Heart right ventricle (tissue), 16 donors: ENCODE measurements at regions of chr20 and their contacts with region 1.

Region 1: GRCh38 chr20:19661717-19662636 is 96.1 kb upstream of the RIN2 start:
- DNase-seq: peak; percentile 40 to 53
- ATAC-seq: peak; percentile 71 to 83 (median 80)
- H3K4me3 ChIP-seq: no peak overlapping the region
- H3K27ac ChIP-seq: no peak overlapping the region
- H3K4me1 ChIP-seq: peaks cover 0 to 7% (median 5%) of the 10 kb centered on the region in 9 donors
- H3K27me3 ChIP-seq: peaks cover 0 to 34% (median 12%) of the 10 kb centered on the region in 7 donors
- CTCF ChIP-seq: peak; percentile 94 to 99 (median 97)

Region 2: GRCh38 chr20:18412221-18412901 is 1249.6 kb before region 1 on chr20:
- intact Hi-C with region 1: loop called in 1 of 10 experiments (anchors 10 kb)
- DNase-seq: no peak
- ATAC-seq: peak in 1 of 8 donors; percentile 20
- H3K4me3 ChIP-seq: no peak overlapping the region
- H3K27ac ChIP-seq: peak overlapping the region in 1 of 10 donors; percentile 11
- H3K4me1 ChIP-seq: peaks cover 0 to 4% (median 0%) of the 10 kb centered on the region in 9 donors
- H3K27me3 ChIP-seq: no peaks in the 10 kb centered on the region
- CTCF ChIP-seq: no peak

Region 3: DNA sequence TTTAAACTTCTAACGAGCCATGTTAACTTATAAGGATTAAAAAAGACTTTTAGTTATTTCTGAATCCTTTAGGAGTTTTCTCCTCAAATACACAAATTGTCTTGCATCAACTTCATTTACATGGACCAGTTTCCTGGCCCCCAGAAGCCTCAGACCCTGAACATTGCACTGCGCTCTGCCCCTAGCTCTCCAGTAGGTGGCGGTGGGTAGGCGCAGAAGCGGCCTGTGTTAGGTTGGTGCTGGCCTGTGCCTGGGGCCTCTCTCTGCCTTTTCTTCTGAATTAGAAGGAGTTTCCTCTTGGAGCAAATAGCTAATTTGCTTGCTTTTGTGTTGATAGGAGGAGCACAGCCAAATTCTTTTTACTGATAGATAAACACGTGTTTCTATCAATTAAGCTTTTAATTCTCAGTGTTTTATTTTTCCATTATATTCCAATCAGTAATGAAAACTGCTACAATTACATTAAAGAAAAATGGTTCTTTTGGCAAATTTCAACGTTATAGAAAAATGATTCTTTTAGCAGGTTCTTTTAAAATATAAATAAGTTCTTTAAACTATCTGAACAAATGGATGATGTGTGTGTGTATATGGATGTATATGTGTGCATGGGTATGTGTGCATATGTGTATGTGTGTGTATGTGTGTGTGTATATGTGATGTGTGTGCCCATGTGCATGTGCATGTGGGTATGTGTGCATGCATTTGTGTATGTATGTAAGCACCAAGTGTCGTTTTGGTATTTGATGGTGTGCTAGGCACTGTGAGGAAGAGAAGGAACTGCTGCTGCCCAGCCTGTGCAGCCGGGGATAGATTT is 1029.6 kb before region 1 on chr20:
- intact Hi-C with region 1: loop called in 5 of 10 experiments (anchors 5 to 10 kb)
- DNase-seq: peak; percentile 53 to 57
- ATAC-seq: peak; percentile 83 to 94 (median 88)
- H3K4me3 ChIP-seq: no peak overlapping the region
- H3K27ac ChIP-seq: no peak overlapping the region
- H3K4me1 ChIP-seq: no peaks in the 10 kb centered on the region
- H3K27me3 ChIP-seq: no peaks in the 10 kb centered on the region
- CTCF ChIP-seq: peak; percentile 59 to 94 (median 83)

Region 4: GRCh38 chr20:19205977-19206396 is 456.0 kb before region 1 on chr20:
- intact Hi-C with region 1: loop called (anchors 1 to 5 kb)
- DNase-seq: peak; percentile 61 to 81
- ATAC-seq: peak in 7 of 8 donors; percentile 19 to 69 (median 58)
- H3K4me3 ChIP-seq: no peak overlapping the region
- H3K27ac ChIP-seq: no peak overlapping the region
- H3K4me1 ChIP-seq: no peaks in the 10 kb centered on the region
- H3K27me3 ChIP-seq: peaks cover 0 to 24% (median 1%) of the 10 kb centered on the region in 7 donors
- CTCF ChIP-seq: peak; percentile 73 to 92 (median 90)

Region 5: DNA sequence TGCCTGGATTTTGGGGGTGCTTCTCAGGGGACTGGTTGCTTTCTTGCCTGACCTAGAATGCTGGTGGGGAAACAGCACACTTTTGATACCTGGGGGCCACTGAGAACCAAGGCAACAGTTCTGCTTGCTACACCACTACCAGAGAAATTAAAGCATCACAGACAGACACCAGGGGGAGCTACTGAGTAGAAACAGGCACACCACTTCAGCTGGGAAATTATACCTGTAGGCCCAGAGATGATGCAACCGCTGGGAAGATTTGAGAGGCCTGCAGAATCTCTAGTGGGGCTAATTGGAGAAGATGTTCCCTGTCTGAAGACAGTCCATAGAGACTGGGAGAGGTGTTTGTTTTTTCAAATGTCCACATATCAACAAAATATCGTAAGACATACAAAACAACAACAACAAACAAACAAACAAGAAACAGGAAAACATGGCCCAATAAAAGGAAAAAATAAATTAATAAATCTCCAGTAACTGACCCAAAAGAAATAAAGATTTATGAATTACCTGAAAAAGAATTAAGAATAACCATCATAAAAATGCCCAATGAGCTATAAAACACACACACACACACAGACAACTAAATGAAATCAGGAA is 33.3 kb before region 1 on chr20:
- intact Hi-C with region 1: loop called in 5 of 10 experiments (anchors 1 to 5 kb)
- DNase-seq: peak in 1 of 2 donors; percentile 50
- ATAC-seq: peak in 3 of 8 donors; percentile 29 to 54 (median 53)
- H3K4me3 ChIP-seq: no peak overlapping the region
- H3K27ac ChIP-seq: no peak overlapping the region
- H3K4me1 ChIP-seq: peaks cover 0 to 2% (median 0%) of the 10 kb centered on the region in 9 donors
- H3K27me3 ChIP-seq: peaks cover 0 to 9% (median 0%) of the 10 kb centered on the region in 7 donors
- CTCF ChIP-seq: peak; percentile 40 to 72 (median 66)